ENCODE measurements at regions of chr1 and their contacts with region 1.

Region 1: DNA sequence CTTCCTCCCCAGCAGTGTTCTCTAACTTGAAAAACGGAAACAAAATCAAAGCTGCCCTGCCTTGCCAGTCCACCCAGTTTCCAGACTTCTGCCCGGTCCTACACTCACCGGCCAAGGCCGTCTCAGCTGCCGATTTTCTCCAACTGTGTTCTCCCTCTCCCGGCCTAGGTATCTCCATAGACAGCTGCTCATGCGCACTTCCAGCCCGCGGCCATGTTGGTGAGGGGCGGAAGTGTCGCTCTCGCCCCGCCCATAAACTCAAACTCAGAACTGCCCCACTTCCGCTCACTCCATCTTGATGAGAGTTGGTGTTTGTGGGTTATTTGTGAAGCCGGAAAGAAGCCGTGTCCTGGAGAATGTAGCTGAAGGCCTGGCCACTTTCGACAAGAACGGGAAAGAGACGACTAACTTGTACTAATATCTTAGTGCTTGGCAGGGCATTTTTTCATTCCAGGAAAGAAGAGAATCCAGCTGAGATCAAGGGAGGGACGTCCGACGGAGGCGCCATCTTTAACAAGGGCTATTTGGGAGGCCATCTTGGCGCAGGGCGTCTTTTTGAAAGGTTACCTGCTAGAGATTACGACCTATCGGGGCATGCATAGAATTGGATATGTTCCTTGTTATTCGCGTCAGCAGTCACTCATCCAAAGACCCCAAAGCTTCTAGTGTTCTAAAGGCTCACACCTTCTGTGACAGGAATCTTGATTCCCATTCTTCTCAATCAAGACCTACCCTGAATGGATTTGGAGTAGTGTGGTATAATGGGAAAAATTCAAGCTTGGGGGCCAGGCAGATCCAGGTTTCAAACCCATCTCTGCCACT is at the start of gene USF1:
- DNase-seq: peak; percentile 99
- H3K4me3 Mint-ChIP-seq: peak within 1 kb of the TSS; percentile 93
- H3K27ac Mint-ChIP-seq: peak within 1 kb of the TSS; percentile 99
- H3K4me1 Mint-ChIP-seq: peaks cover 18% of the 10 kb centered on the region
- H3K27me3 Mint-ChIP-seq: no peaks in the 10 kb centered on the region
- CTCF ChIP-seq: no peak
- total RNA-seq, gene USF1: 48.8 and 52.8 TPM in 2 replicates

Region 2: DNA sequence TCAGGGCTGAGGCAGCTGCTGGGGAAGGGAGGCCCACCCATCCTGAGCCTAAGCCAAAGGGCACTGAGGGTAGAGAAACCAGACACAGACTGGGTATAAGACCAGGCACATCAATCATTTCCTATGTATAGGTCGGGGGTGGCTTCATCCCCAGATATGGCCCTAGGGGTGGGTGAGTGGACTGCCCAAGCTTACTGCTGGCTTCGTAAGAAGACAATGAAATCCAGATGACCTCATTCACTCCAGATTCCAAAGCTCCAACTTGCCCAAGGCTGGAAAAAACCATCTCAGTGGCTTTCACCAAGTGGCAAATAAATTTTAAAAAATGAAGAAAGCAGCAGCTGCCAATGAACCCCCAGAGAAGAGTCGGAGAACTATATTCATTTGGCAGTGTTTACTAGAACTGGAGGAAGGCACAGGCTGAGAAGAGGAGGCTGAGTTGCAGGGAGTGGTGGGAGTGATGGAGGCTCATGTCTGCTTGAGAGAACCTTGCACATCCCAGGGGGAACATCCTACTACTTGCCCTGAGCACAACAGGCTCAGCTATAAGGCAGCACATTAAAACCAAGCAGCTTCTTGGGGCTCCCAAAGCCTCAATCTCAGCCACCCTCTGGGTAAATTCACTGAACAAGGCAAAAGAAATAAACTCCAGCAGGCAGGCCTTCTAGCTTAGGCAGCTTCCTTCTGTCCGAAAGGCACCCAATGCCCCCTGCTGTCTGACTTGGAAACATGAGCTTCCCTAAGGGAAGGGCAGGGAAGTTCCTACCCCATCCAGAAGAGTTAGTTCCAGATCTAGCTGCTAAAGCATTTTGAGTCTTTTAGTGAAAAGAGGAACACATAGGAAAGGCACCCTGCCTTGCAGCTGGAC is 826.7 kb before region 1 on chr1:
- CTCF ChIA-PET with region 1: no interaction called
- POLR2A ChIA-PET with region 1: no interaction called
- intact Hi-C with region 1: no loop called
- DNase-seq: peak; percentile 61
- H3K4me3 Mint-ChIP-seq: no peak overlapping the region
- H3K27ac Mint-ChIP-seq: no peak overlapping the region
- H3K4me1 Mint-ChIP-seq: peaks cover 7% of the 10 kb centered on the region
- H3K27me3 Mint-ChIP-seq: no peaks in the 10 kb centered on the region
- CTCF ChIP-seq: peak; percentile 47

Region 3: GRCh38 chr1:160837558-160838205 is 208.3 kb before region 1 on chr1:
- CTCF ChIA-PET with region 1: interaction called, 13 read pairs
- POLR2A ChIA-PET with region 1: no interaction called
- intact Hi-C with region 1: no loop called
- DNase-seq: no peak
- H3K4me3 Mint-ChIP-seq: no peak overlapping the region
- H3K27ac Mint-ChIP-seq: no peak overlapping the region
- H3K4me1 Mint-ChIP-seq: no peaks in the 10 kb centered on the region
- H3K27me3 Mint-ChIP-seq: no peaks in the 10 kb centered on the region
- CTCF ChIP-seq: no peak

Region 4: DNA sequence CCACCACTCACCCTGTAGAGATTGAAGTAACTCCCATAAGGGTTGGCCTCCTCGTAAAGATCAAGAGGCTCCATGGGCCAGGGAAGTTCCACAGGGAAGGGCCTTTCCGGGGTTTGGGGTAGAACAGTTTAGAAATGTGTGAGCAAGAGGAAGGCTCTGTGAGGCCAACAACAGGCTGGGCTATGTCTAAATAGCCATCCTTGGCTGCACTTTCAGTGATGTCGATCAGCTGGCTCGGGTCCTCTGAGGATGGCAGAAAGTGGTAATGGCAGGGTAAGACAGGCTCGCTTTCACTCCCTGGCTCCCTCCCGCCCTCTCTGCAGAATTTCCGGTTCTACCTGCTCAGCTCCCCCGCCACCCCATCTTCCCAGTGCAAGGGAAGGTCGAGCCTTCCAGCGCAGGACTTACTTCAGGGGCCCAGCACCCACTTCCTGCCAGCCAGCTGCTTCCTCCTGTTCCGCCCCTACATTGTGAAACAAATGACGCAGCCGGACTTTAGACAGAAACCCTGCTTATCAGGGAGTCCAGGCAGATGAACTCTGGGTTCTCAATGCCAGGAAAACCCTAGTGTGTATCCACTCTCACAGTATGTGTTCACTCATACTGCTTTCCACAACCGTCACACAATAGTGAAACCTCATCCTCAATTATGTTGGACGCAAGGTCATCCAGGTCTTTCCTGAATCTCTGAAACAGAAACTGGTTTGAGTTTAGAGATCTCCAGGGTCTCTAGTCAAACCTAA is 32.3 kb before region 1 on chr1:
- CTCF ChIA-PET with region 1: interaction called, 7 read pairs
- POLR2A ChIA-PET with region 1: interaction called, 371 read pairs
- intact Hi-C with region 1: no loop called
- DNase-seq: peak; percentile 96
- H3K4me3 Mint-ChIP-seq: peak overlapping the region; percentile 70
- H3K27ac Mint-ChIP-seq: peak overlapping the region; percentile 93
- H3K4me1 Mint-ChIP-seq: peaks cover 44% of the 10 kb centered on the region
- H3K27me3 Mint-ChIP-seq: no peaks in the 10 kb centered on the region
- CTCF ChIP-seq: no peak

Region 5: DNA sequence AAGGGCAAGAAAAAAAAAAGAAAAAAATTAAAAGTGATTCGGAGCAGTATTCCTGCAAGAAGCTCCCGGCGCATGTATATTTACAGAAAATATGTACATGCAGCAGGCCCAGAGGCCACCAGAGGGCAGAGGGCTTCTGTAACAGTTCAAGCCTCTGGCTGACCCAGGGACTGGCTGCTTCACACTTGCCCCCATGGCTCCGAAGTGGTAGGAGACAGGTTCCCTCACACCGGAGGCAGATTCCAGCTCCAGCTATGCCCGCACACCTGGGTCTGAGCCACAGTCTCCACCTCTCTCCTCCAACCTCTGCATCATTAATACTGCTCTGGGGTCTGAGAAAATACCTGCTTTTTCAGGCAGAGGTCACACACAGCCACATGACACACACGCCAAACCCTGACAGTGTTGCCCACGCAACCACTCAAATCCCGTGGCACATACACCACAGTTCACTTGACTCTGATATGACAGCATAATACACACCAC is 26.0 kb after region 1 on chr1:
- CTCF ChIA-PET with region 1: interaction called, 53 read pairs
- POLR2A ChIA-PET with region 1: interaction called, 122 read pairs
- intact Hi-C with region 1: no loop called
- DNase-seq: peak; percentile 73
- H3K4me3 Mint-ChIP-seq: peak overlapping the region; percentile 90
- H3K27ac Mint-ChIP-seq: peak overlapping the region; percentile 46
- H3K4me1 Mint-ChIP-seq: peaks cover 51% of the 10 kb centered on the region
- H3K27me3 Mint-ChIP-seq: no peaks in the 10 kb centered on the region
- CTCF ChIP-seq: peak; percentile 87

Region 6: GRCh38 chr1:161132410-161133219 is 86.7 kb after region 1 on chr1 and contains the start of gene DEDD:
- CTCF ChIA-PET with region 1: interaction called, 7 read pairs
- POLR2A ChIA-PET with region 1: interaction called, 49 read pairs
- intact Hi-C with region 1: loop called (anchors 10 kb)
- DNase-seq: peak; percentile 99
- H3K4me3 Mint-ChIP-seq: no peak within 1 kb of the TSS
- H3K27ac Mint-ChIP-seq: no peak within 1 kb of the TSS
- H3K4me1 Mint-ChIP-seq: peaks cover 23% of the 10 kb centered on the region
- H3K27me3 Mint-ChIP-seq: no peaks in the 10 kb centered on the region
- CTCF ChIP-seq: no peak
- total RNA-seq, gene DEDD: 63.1 and 73.6 TPM in 2 replicates

Region 7: DNA sequence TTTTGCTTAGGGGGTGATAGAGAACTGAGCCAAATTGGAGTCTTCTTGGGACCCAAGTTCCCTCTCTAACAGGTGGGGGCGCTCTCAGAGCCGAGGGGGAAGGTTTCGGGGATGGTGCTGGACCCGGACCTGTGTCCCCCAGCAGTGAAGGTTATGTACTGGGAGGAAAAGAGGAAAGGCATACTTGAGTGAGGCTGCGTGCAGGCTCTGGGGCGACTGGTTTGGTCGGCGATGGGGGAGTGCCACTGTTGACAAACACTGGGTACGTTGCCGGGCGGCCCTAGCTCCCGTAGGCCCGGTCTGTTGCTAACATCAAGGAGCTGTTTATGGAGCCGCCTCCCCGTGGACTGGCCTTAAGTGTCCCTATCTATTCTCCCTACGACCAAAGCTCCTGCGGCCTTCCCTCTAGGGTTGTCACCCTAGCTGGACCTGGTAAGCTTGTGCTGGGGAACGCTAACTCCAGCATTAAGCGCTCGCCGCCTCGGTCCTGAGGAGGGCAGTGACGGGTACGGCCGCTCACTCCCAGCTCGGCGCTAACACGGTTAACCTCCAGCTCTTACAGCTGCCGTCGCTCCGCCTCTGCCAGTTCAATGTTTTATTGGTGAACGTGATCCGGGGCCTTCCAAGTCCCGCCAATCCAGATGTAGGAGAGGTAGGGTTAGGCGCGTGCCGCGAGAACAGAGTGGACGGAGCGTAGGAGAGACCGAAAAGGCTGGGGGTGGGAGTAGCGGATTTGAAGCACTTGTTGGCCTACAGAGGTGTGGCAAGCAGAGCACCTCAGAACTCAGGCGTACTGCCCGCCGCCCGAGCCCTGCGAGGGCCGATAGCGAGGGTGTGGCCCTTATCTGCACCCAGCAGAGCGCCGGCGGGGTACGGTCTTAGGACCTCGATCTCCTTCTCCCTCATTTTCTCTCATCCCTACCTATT is 120.0 kb after region 1 on chr1 and contains the start of gene PPOX:
- CTCF ChIA-PET with region 1: interaction called, 4 read pairs
- POLR2A ChIA-PET with region 1: interaction called, 13 read pairs
- intact Hi-C with region 1: no loop called
- DNase-seq: peak; percentile 100
- H3K4me3 Mint-ChIP-seq: peak within 1 kb of the TSS; percentile 98
- H3K27ac Mint-ChIP-seq: peak within 1 kb of the TSS; percentile 100
- H3K4me1 Mint-ChIP-seq: peaks cover 47% of the 10 kb centered on the region
- H3K27me3 Mint-ChIP-seq: no peaks in the 10 kb centered on the region
- CTCF ChIP-seq: peak; percentile 36
- total RNA-seq, gene PPOX: 30.3 and 32.4 TPM in 2 replicates